ENCODE measurements at regions of chr18 and their contacts with region 1.

Region 1: GRCh38 chr18:61064911-61065310 is 268.3 kb upstream of the CDH20 start:
- DNase-seq: no peak
- H3K4me3 ChIP-seq: no peak overlapping the region
- H3K27ac ChIP-seq: no peak overlapping the region
- H3K4me1 ChIP-seq: no peaks in the 10 kb centered on the region
- H3K27me3 ChIP-seq: no peaks in the 10 kb centered on the region
- CTCF ChIP-seq: no peak
- EP300 ChIP-seq: no peak
- POLR2A ChIP-seq: no peak

Region 2: GRCh38 chr18:60826346-60826745 is 238.6 kb before region 1 on chr18:
- in situ Hi-C with region 1: no loop called
- intact Hi-C with region 1: no loop called
- DNase-seq: no peak
- H3K4me3 ChIP-seq: no peak overlapping the region
- H3K27ac ChIP-seq: no peak overlapping the region
- H3K4me1 ChIP-seq: no peaks in the 10 kb centered on the region
- H3K27me3 ChIP-seq: no peaks in the 10 kb centered on the region
- CTCF ChIP-seq: no peak
- EP300 ChIP-seq: no peak
- POLR2A ChIP-seq: no peak

Region 3: GRCh38 chr18:60873708-60874107 is 191.2 kb before region 1 on chr18:
- in situ Hi-C with region 1: no loop called
- intact Hi-C with region 1: no loop called
- DNase-seq: no peak
- H3K4me3 ChIP-seq: no peak overlapping the region
- H3K27ac ChIP-seq: no peak overlapping the region
- H3K4me1 ChIP-seq: no peaks in the 10 kb centered on the region
- H3K27me3 ChIP-seq: no peaks in the 10 kb centered on the region
- CTCF ChIP-seq: no peak
- EP300 ChIP-seq: no peak
- POLR2A ChIP-seq: no peak

Region 4: DNA sequence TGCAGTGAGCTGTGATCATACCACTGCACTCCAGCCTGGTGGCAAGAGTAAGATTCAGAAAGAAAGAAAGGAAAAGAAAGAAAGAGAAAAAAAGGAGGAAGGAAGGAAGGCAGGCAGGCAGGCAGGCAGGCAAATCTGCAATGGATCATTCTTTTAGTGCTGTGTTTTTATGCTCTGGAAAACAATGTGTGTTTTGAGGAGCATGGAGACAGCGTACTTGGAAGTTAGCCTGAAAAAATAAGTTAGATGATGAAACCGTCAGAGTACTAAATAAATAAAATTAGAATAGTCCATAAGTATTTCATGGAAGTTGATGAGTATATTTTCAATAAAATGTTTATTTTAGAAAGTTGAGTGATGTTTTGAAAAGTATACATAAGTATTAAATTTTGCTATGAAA is 98.0 kb before region 1 on chr18:
- in situ Hi-C with region 1: loop called in 1 of 4 experiments (anchors 25 kb)
- intact Hi-C with region 1: no loop called
- DNase-seq: no peak
- H3K4me3 ChIP-seq: no peak overlapping the region
- H3K27ac ChIP-seq: no peak overlapping the region
- H3K4me1 ChIP-seq: no peaks in the 10 kb centered on the region
- H3K27me3 ChIP-seq: no peaks in the 10 kb centered on the region
- CTCF ChIP-seq: no peak
- EP300 ChIP-seq: no peak
- POLR2A ChIP-seq: no peak